ENCODE measurements at regions of chr6 and their contacts with region 1.

Region 1: GRCh38 chr6:12011276-12012076 is 636 bp upstream of the HIVEP1 start:
- DNase-seq: peak; percentile 96 to 99 (median 98)
- ATAC-seq: peak; percentile 85
- H3K4me3 ChIP-seq: peak overlapping the region; percentile 73
- H3K27ac ChIP-seq: peak overlapping the region; percentile 99
- H3K4me1 ChIP-seq: peaks cover 19% of the 10 kb centered on the region in 2 experiments
- H3K27me3 ChIP-seq: no peaks in the 10 kb centered on the region; a peak in 1 of 5 replicates
- CTCF ChIP-seq: peak in 1 of 3 experiments; percentile 1; a peak in 1 of 6 replicates
- EP300 ChIP-seq: peak; percentile 44; the same call in 1 of the 2 replicates
- POLR2A ChIP-seq: no peak
- RAD21 ChIP-seq: no peak

Region 2: GRCh38 chr6:11485271-11485670 is 526.2 kb before region 1 on chr6:
- CTCF ChIA-PET with region 1: no interaction called
- POLR2A ChIA-PET with region 1: no interaction called
- in situ Hi-C with region 1: no loop called
- intact Hi-C with region 1: no loop called
- DNase-seq: no peak
- ATAC-seq: no peak
- H3K4me3 ChIP-seq: no peak overlapping the region
- H3K27ac ChIP-seq: no peak overlapping the region
- H3K4me1 ChIP-seq: no peaks in the 10 kb centered on the region
- H3K27me3 ChIP-seq: peaks cover 3 to 6% of the 10 kb centered on the region in 2 experiments; a peak in 2 of 5 replicates
- CTCF ChIP-seq: no peak
- EP300 ChIP-seq: no peak
- POLR2A ChIP-seq: no peak
- RAD21 ChIP-seq: no peak

Region 3: DNA sequence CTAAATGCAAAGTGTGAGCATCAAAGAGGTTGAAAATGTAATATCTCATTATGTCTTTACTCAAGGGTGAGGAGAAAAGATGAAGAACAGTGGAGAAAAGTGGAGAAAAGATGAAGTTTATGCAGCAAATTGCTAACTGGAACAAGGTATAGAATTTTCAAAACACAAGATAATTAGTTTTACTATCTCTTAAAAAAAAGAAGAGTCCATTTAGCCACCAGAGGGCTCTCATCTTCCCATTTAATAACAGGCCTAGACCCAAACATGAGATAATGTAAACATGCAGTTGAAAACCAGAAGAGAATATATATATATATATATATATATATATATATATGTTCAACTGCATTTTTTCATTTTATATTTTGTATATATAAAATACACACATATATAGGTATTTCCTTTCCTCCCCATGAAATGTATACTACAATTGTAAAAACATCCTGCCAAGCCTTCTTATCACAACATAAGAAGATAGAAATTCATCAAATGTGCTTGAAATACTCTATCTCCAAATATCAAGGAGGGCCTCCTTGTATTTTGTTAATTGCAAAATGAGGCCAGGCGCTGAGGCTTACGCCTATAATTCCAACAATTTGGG is 311.3 kb before region 1 on chr6:
- CTCF ChIA-PET with region 1: interaction called, 4 read pairs
- POLR2A ChIA-PET with region 1: interaction called, 3 read pairs
- in situ Hi-C with region 1: no loop called
- intact Hi-C with region 1: loop called (anchors 2 kb)
- DNase-seq: peak; percentile 50 to 75 (median 57)
- ATAC-seq: peak; percentile 66
- H3K4me3 ChIP-seq: no peak overlapping the region
- H3K27ac ChIP-seq: no peak overlapping the region
- H3K4me1 ChIP-seq: no peaks in the 10 kb centered on the region; a peak in 2 of 5 replicates
- H3K27me3 ChIP-seq: no peaks in the 10 kb centered on the region
- CTCF ChIP-seq: peak; percentile 31 to 68 (median 47); a peak in 3 of 6 replicates
- EP300 ChIP-seq: no peak
- POLR2A ChIP-seq: no peak
- RAD21 ChIP-seq: peak; percentile 66 to 83

Region 4: DNA sequence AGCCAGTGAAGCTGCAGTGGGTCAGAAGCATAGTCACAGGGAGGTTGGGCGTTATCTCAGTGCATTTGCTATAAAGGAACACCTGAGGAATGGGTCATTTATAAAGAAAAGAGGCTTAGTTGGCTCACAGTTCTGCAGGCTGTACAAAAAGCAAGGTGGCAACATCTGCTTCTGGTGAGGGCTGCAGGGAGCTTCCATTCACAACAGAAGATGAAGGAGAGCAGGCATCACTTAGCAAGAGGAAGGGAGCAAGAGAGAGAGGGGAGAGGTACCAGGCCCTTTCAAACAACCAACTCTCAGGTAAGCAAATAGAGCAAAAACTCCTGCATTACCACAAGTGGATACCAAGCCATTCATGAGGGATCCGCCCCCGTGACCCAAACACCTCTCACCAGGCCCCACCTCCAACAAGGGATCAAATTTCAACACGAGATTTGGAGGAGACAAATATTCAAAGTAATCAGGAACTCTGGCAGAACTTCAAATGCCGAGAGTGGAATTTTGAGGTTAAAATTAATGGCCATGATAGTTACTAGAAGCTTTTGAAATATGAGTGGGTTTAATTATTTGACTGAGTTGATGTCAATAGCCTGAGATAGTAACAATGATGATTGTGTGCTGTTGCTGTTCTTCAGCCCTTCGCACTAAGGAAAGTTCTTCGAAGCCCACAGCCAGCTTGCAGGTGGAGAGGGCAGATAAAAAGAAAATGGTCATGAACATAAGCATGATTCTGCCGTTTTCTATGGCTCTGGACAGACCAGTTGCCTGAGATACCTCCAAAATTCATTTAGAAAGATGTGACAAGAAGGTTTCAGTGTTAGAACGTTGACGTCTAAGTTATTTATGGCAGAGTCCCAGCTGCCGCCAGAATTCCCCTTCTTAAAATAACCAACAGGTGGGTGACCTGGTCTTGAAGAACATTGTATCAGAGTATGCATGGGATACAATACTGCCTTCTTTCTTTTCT is 177.6 kb before region 1 on chr6:
- CTCF ChIA-PET with region 1: no interaction called
- POLR2A ChIA-PET with region 1: interaction called, 4 read pairs
- in situ Hi-C with region 1: no loop called
- intact Hi-C with region 1: loop called (anchors 5 kb)
- DNase-seq: peak; percentile 28 to 90 (median 58)
- ATAC-seq: peak; percentile 91
- H3K4me3 ChIP-seq: peak overlapping the region; percentile 6; the same call in 1 of the 2 replicates
- H3K27ac ChIP-seq: peak overlapping the region; percentile 74
- H3K4me1 ChIP-seq: peaks cover 14 to 33% of the 10 kb centered on the region in 2 experiments; a peak in 4 of 5 replicates
- H3K27me3 ChIP-seq: no peaks in the 10 kb centered on the region
- CTCF ChIP-seq: no peak
- EP300 ChIP-seq: peak; percentile 92
- POLR2A ChIP-seq: no peak
- RAD21 ChIP-seq: peak in 1 of 2 experiments; percentile 22; a peak in 1 of 4 replicates

Region 5: GRCh38 chr6:11929241-11929850 is 82.1 kb before region 1 on chr6:
- CTCF ChIA-PET with region 1: no interaction called
- POLR2A ChIA-PET with region 1: interaction called, 7 read pairs
- in situ Hi-C with region 1: no loop called
- intact Hi-C with region 1: loop called (anchors 1 kb)
- DNase-seq: no peak
- ATAC-seq: no peak
- H3K4me3 ChIP-seq: no peak overlapping the region
- H3K27ac ChIP-seq: peak overlapping the region; percentile 94
- H3K4me1 ChIP-seq: peaks cover 24% of the 10 kb centered on the region in 2 experiments; a peak in 4 of 5 replicates
- H3K27me3 ChIP-seq: no peaks in the 10 kb centered on the region
- CTCF ChIP-seq: no peak
- EP300 ChIP-seq: no peak
- POLR2A ChIP-seq: no peak
- RAD21 ChIP-seq: no peak

Region 6: DNA sequence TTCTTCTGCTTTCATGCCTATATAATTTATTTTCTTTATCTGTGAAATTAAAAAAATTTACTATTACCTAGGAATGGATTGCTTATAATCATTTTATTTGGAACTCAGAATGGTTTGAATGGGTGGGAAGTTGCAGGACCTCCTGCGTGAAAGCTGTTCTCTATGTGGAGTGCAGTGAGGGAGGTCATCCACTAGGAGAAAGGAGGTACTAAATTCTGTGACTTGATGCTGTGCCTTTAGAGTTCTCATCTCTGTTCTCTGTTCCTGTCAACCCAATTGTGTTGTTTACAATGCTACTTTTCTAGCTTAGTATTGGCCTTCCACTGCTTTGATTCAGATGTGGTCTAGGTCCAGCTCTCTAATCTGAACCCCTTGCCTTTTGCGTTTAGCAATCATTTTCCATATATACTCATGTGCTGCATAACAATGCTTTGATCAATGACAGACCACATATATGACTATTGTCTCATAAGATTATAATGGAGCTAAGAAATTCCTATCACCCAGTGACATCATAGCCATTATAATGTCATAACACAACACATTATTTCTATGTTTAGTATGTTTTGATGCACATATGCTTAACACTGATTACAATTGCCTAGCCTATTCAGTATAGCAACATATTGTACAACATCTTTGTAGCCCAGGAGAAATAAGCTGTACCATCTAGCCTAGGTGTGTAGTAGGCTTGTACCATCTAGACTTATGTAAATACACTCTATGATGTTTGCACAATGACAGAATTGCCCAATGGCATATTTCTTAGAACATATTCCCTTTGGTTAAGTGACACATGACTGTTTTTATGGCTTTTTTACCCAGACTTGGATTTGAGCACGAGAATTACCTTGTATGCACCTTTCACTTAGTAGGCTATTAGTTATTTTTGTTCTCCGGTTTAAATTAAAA is 64.2 kb before region 1 on chr6:
- CTCF ChIA-PET with region 1: no interaction called
- POLR2A ChIA-PET with region 1: no interaction called
- in situ Hi-C with region 1: no loop called
- intact Hi-C with region 1: no loop called
- DNase-seq: peak in 3 of 4 experiments; percentile 40 to 56 (median 43)
- ATAC-seq: peak; percentile 80
- H3K4me3 ChIP-seq: no peak overlapping the region
- H3K27ac ChIP-seq: no peak overlapping the region
- H3K4me1 ChIP-seq: peaks cover under 1 to 15% of the 10 kb centered on the region in 2 experiments; a peak in 2 of 5 replicates
- H3K27me3 ChIP-seq: no peaks in the 10 kb centered on the region
- CTCF ChIP-seq: peak in 2 of 3 experiments; percentile 39 to 53; a peak in 3 of 6 replicates
- EP300 ChIP-seq: no peak
- POLR2A ChIP-seq: no peak
- RAD21 ChIP-seq: 0 out of 4 replicates have a peak, but pooled peaks of 1 of the 2 experiments have one; percentile 32

Region 7: DNA sequence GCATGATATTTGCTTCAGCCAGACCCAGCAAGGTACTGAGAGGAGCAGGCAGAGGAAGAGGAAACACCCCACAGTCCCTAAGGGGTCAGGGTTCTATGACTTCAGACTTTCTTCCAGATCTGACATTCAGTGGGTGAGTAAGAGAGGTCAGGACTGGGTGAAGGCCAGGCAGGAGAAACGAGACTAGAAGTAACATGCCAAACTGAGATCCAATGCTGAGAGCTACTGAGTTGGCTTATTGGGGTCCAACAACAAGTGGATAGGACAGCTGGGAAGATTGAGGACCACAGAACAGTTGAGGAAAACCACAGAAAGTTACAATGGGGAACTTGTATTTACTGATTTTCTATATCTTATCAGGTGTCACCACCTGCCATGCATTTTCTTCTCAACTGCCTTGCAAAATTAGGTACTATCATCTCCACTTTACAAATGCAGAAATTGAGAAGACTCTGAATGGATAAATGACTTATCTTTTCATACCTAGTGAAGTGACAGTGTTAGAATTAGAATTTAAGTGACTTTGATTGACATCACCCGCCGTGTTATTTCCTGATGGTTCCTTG is 43.2 kb before region 1 on chr6:
- CTCF ChIA-PET with region 1: no interaction called
- POLR2A ChIA-PET with region 1: no interaction called
- in situ Hi-C with region 1: no loop called
- intact Hi-C with region 1: loop called (anchors 2 kb)
- DNase-seq: peak; percentile 48 to 82 (median 65)
- ATAC-seq: peak; percentile 91
- H3K4me3 ChIP-seq: no peak overlapping the region
- H3K27ac ChIP-seq: peak overlapping the region; percentile 61; the same call in 2 of the 3 replicates
- H3K4me1 ChIP-seq: peaks cover 7 to 21% of the 10 kb centered on the region in 2 experiments
- H3K27me3 ChIP-seq: no peaks in the 10 kb centered on the region
- CTCF ChIP-seq: no peak
- EP300 ChIP-seq: peak; percentile 74
- POLR2A ChIP-seq: no peak
- RAD21 ChIP-seq: peak in 1 of 2 experiments; percentile 32; a peak in 1 of 4 replicates

Region 8: DNA sequence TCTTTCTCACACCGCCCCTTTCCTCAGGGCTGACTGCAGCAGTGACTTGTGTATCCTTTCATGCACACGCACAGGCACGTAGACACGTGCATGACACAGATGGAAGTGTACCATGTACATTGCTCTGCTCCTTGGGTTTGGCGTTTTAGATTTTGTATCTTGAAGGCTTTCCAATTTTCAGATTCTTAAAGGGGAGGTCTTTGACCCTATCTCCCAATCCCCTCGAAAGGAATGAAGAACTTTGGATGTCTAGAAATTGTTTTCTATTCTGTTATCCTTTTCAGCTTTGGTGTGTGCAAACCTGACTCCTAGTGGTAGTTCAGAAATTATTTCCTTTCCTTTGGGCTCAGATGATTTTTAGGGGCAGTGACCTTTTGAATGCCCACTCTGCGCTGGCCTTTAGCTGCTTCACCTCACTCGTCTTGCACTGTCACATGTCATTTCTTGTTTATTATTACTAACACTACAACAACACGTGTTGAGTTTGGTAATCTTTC is 63.6 kb after region 1 on chr6:
- CTCF ChIA-PET with region 1: no interaction called
- POLR2A ChIA-PET with region 1: interaction called, 3 read pairs
- in situ Hi-C with region 1: no loop called
- intact Hi-C with region 1: loop called (anchors 5 kb)
- DNase-seq: peak in 2 of 4 experiments; percentile 40 to 47
- ATAC-seq: peak; percentile 74
- H3K4me3 ChIP-seq: no peak overlapping the region
- H3K27ac ChIP-seq: no peak overlapping the region
- H3K4me1 ChIP-seq: peaks cover 0 to 14% of the 10 kb centered on the region in 2 experiments; a peak in 3 of 5 replicates
- H3K27me3 ChIP-seq: no peaks in the 10 kb centered on the region
- CTCF ChIP-seq: peak; percentile 51 to 72 (median 57); a peak in 5 of 6 replicates
- EP300 ChIP-seq: no peak
- POLR2A ChIP-seq: no peak
- RAD21 ChIP-seq: peak; percentile 73 to 80

Region 9: GRCh38 chr6:12595161-12595811 is 583.8 kb after region 1 on chr6:
- CTCF ChIA-PET with region 1: no interaction called
- POLR2A ChIA-PET with region 1: no interaction called
- in situ Hi-C with region 1: no loop called
- intact Hi-C with region 1: no loop called
- DNase-seq: no peak
- ATAC-seq: no peak
- H3K4me3 ChIP-seq: no peak overlapping the region
- H3K27ac ChIP-seq: no peak overlapping the region
- H3K4me1 ChIP-seq: no peaks in the 10 kb centered on the region
- H3K27me3 ChIP-seq: no peaks in the 10 kb centered on the region
- CTCF ChIP-seq: no peak
- EP300 ChIP-seq: no peak
- POLR2A ChIP-seq: no peak
- RAD21 ChIP-seq: no peak

Region 10: DNA sequence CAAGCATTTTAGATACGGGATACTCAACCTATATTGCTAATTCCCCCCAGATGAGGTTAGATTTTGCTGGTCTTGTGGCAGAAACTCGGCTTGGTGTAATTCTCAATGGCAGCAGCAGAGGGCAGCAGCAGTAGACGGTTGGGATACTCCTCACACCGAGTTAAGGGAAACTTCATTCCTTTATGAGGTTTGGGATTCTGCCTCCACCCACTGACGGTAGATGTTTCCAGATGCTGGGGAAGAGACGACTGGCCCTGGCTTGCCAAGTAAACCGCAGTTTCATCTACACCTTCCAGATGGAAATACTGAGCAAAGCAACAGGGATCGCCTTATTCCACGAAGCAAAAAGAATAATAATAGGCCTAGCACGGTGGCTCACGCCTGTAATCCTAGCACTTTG is 1325.1 kb after region 1 on chr6:
- CTCF ChIA-PET with region 1: no interaction called
- POLR2A ChIA-PET with region 1: no interaction called
- in situ Hi-C with region 1: no loop called
- intact Hi-C with region 1: no loop called
- DNase-seq: peak; percentile 79 to 84 (median 82)
- ATAC-seq: peak; percentile 89
- H3K4me3 ChIP-seq: no peak overlapping the region
- H3K27ac ChIP-seq: no peak overlapping the region
- H3K4me1 ChIP-seq: peaks cover 9% of the 10 kb centered on the region in 2 experiments
- H3K27me3 ChIP-seq: peaks cover 0 to 3% of the 10 kb centered on the region in 2 experiments; a peak in 2 of 5 replicates
- CTCF ChIP-seq: peak; percentile 92 to 94 (median 94)
- EP300 ChIP-seq: 0 out of 2 replicates have a peak, but pooled peaks have one; percentile 4
- POLR2A ChIP-seq: no peak
- RAD21 ChIP-seq: peak; percentile 86 to 87

Measured in K562 (cell line).